Sigmoid colon (tissue), 7 donors: ENCODE measurements at regions of chr19 and their contacts with region 1.

Region 1: DNA sequence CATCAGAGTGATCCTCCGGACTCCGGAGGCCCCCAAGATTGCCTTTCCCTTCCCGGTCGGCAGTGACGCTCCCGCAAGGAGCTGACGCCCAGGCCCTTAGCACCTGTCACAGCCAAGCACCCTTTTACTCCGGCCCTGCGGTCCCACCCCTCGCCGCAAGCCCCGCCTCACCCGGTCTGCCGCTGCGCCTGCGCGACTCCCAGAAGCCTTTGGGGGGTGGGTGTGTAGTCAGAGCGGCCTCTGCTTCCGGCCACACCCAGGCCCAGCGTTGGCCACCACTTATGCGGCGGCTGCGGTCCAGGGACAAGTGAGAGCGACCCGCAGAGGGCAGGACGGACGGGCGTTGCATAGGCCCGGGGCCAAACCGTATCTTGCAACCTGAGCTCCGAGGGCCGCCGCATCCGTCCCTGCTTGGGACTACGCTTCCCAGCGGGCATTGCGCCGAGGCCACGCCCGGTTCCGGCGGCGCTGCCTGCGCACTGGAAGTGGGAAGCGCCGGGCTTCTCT is 441 bp upstream of the ZFP28 start:
- DNase-seq: peak; percentile 96
- H3K4me3 ChIP-seq: peak overlapping the region; percentile 67 to 85 (median 82)
- H3K27ac ChIP-seq: peak overlapping the region; percentile 88 to 92 (median 90)
- H3K4me1 ChIP-seq: peaks cover 0 to 22% (median 17%) of the 10 kb centered on the region in 4 donors
- H3K27me3 ChIP-seq: no peaks in the 10 kb centered on the region
- CTCF ChIP-seq: peak in 1 of 4 experiments; percentile 14
- EP300 ChIP-seq: no peak
- POLR2A ChIP-seq: no peak

Region 2: DNA sequence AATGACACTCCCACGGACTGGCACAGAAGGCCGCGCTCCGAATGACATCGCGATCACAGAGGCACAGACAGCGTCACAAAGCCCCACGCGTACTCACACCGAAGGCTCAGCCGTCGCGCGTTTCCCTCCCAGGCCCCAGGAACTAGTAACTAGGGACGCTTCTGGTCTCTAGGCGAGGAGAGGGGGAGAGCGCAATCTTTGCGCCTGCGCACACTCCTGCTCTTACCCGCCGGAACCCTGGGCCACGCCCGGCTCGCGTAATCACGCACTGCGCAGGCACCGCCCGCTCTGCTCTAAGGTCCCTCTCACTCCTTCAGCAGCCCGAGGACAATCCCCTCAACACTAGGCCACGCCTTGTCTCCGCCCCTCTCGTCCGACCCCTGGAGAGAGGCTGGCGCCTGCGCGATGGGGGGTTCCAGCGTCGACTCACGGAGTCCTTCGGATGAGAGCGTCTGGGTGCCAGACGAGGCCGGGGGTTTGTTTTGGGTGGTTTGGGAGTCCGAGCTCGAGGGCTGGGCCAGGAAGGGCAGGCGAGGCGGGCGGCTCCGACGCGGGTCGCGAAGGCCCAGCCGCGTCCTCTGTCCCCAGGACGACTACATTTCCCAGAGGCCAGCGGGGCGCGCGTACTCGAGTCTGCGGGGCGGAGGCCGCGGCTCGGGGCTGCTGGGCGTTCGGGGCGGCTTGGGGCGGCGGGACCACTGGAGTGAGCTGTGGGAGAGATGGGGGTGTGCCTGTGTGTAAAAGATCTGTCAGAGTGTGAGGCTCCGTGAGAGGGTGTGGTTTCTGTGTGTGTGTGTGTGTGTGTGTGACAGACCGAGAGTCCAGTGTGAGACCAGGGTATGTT is 30.6 kb before region 1 on chr19 and contains the start of gene ZNF471:
- intact Hi-C with region 1: loop called (anchors 1 kb)
- DNase-seq: peak; percentile 99
- H3K4me3 ChIP-seq: peak within 1 kb of the TSS; percentile 68 to 82 (median 80)
- H3K27ac ChIP-seq: peak within 1 kb of the TSS; percentile 94 to 99 (median 96)
- H3K4me1 ChIP-seq: peaks cover 0 to 12% (median 6%) of the 10 kb centered on the region in 4 donors
- H3K27me3 ChIP-seq: no peaks in the 10 kb centered on the region
- CTCF ChIP-seq: no peak
- EP300 ChIP-seq: no peak
- POLR2A ChIP-seq: no peak
- total RNA-seq, gene ZNF471: 8.1 to 11.4 (median 9.3) TPM